Esophagus squamous epithelium (tissue), 5 donors: ENCODE measurements at regions of chr17 and their contacts with region 1.

Region 1: GRCh38 chr17:17141860-17142552 is 64.1 kb downstream of the PLD6 start:
- DNase-seq: no peak
- H3K4me3 ChIP-seq: no peak overlapping the region
- H3K27ac ChIP-seq: peak overlapping the region in 2 of 4 donors; percentile 32 to 46
- H3K4me1 ChIP-seq: peaks cover 14 to 33% (median 19%) of the 10 kb centered on the region in 3 donors
- H3K27me3 ChIP-seq: no peaks in the 10 kb centered on the region
- CTCF ChIP-seq: peak; percentile 22 to 94 (median 90)
- POLR2A ChIP-seq: no peak

Region 2: DNA sequence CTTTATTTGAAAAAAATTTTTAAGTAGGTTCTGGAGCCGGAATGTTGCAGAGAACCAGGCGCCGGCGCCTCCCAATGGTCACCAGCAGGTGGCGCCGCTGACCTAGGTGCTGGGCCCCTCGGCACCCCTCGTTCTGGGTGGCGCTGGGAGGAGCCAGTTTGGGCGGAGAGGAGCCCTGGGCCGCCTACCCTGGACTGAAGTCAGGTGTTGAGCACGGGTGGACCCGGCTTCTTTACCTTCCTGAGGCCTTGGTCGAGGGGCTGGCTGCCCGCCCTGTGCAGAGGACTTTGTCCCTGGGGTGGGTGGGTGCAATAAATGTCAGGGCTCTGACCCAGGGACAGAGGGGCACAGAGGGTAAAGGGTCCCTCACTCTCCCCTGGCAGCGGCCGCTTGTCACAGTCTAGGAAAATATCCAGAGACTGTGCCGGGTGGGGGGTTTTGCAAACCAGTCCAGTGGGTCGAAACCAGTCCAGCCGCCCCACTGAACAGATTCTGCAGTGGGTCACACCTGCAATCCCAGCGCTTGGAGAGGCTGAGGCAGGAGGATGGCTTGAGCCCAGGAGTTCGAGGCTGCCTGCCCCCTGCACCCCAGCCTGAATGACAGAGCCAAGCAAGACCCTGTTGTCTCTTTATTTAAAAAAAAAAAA is 140.0 kb before region 1 on chr17:
- intact Hi-C with region 1: loop called (anchors 10 kb)
- DNase-seq: no peak
- H3K4me3 ChIP-seq: peak overlapping the region in 1 of 4 donors; percentile 40
- H3K27ac ChIP-seq: no peak overlapping the region
- H3K4me1 ChIP-seq: peaks cover 4 to 11% (median 4%) of the 10 kb centered on the region in 3 donors
- H3K27me3 ChIP-seq: no peaks in the 10 kb centered on the region
- CTCF ChIP-seq: peak; percentile 86 to 98 (median 96)
- POLR2A ChIP-seq: no peak

Region 3: DNA sequence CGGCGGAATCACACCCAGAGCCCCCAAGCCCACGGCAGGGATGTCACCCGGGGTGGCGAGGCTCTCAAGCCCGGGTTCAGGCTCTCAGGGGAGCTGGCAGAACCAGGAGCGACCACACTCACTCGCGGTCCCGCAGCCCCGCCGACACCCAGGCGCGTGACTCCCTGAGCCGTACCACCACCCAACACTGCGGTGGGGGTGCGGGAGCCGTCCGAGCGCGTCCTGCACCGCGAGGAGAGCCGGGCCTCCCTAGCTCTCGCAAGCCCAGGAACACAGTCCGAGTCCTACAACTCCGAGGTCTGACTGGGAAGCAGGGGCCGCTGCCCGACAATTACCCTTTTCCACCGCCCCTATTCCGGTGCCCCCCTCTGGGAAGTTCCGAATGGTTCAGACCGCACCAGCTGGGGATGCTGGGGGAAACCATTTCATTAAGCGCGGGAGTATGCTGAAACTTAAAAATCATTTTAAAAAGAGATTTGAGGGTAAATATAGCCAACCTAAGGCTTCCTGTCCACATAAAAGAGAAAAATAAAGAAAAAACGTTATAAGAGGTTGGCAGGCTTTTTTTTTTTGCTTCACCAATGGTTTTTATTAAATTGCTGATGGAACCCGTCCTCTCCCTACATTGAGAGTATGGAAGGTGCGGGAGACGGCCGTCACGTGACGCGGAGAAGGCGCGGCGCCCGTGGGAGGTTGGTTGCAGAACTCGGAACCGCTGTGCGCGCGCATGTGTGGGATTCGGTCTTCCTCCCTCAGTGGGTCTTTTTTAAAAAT is 95.2 kb after region 1 on chr17 and contains the start of gene FLCN:
- intact Hi-C with region 1: loop called (anchors 10 kb)
- DNase-seq: peak; percentile 57
- H3K4me3 ChIP-seq: peak within 1 kb of the TSS; percentile 85 to 96 (median 92)
- H3K27ac ChIP-seq: peak within 1 kb of the TSS; percentile 96 to 98 (median 97)
- H3K4me1 ChIP-seq: peaks cover 11 to 46% (median 25%) of the 10 kb centered on the region in 3 donors
- H3K27me3 ChIP-seq: no peaks in the 10 kb centered on the region
- CTCF ChIP-seq: peak in 2 of 6 experiments; percentile 21 to 32
- POLR2A ChIP-seq: peak in 3 of 4 donors; percentile 20 to 77 (median 62)
- total RNA-seq, gene FLCN: 11.6 to 27.5 (median 12.4) TPM